HCT116 (cell line): ENCODE measurements at regions of chr9 and their contacts with region 1.

Region 1: DNA sequence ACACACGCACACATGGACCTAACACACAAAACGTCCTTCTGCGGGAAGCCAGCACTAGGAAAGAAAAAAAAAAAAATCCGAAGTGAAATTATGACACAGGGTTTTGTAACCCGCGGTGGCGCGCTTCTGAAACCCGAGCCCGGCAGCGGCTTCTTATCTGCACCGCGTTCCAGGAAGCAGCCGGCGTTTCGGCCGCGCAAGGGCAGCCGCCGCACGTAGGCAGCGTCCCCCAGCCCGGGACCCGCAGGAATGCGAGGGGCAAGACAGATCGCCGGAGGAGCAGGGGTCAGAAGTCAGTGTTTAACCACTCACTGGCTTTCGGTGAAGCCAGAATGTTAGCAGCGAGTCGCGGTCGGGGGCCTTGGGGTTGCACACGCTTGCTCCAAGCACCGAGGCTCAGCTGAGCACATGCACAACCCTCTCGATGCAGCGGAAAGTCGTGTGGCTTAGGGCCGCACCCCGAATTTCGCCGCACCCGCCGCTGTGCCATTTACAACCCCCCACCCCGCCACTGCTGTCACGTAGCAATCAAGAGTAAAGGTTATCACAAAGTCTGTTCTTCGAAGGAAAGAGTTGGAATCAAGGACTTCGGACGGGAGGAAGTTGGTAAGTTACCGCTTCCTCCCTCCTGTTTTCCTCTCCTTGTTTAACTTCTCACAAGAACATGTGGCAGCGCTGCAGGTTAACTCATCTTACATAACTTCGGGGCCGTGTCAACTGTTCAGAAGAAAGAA is 167.9 kb downstream of the AUH start:
- DNase-seq: peak; percentile 64
- ATAC-seq: peak; percentile 56
- H3K4me3 ChIP-seq: peak overlapping the region; percentile 42 to 58
- H3K27ac ChIP-seq: peak overlapping the region; percentile 100
- H3K4me1 ChIP-seq: peaks cover 62 to 83% of the 10 kb centered on the region in 2 experiments
- H3K27me3 ChIP-seq: no peaks in the 10 kb centered on the region
- CTCF ChIP-seq: no peak
- POLR2A ChIP-seq: no peak
- RAD21 ChIP-seq: no peak

Region 2: DNA sequence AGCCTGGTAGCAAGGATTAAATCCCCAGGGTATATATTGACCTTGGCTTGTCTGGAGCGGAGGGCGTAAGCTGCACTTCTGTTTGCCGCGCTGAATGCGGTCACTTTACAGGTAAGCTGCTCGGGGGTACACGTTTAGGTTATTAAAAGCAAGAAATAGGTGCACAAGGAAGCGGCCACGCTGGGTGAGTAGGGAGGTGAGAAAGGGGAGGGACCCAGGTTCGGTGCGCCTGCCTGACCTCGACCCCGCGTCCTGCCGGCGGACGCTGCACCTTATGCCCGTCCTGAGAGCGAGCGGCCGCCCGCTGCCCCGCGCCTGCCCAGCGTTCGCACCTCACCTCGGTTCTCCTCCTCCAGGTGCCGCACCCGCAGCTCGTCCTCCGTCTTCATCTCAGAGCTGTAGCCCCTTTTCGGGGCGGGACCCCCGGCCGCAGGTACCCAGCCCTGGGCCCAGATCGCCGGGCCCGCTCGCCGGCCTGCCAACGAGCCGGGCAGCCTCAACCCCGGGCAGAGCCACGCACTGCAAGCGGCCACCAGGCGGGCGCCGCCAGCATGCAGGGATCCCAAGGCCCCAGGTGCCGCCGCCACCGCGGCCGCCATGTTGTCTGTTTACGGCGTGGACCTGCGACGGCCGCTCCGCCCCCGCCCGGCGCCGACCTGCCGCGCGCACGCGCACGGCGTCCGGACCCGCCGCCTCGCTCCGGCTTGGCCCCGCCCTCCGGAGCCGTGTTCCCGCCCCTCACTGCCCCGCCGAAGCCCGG is 167.6 kb after region 1 on chr9 and contains the start of gene AUH:
- CTCF ChIA-PET with region 1: no interaction called
- POLR2A ChIA-PET with region 1: interaction called, 3 read pairs
- RAD21 ChIA-PET with region 1: no interaction called
- intact Hi-C with region 1: loop called (anchors 10 kb)
- DNase-seq: peak; percentile 40
- ATAC-seq: peak; percentile 98
- H3K4me3 ChIP-seq: peak within 1 kb of the TSS; percentile 65 to 73
- H3K27ac ChIP-seq: peak within 1 kb of the TSS; percentile 84
- H3K4me1 ChIP-seq: peaks cover 4 to 16% of the 10 kb centered on the region in 2 experiments; a peak in 3 of 4 replicates
- H3K27me3 ChIP-seq: no peaks in the 10 kb centered on the region
- CTCF ChIP-seq: no peak
- POLR2A ChIP-seq: no peak
- RAD21 ChIP-seq: no peak; the same call in 1 of the 2 replicates
- total RNA-seq, gene AUH: 29.0 TPM